ENCODE measurements at regions of chr17 and their contacts with region 1.

Region 1: GRCh38 chr17:29219378-29220047 is 27.1 kb upstream of the CRYBA1 start:
- DNase-seq: peak in 3 of 4 donors; percentile 70 to 91 (median 87)
- ATAC-seq: peak; percentile 94
- H3K4me3 ChIP-seq: no peak overlapping the region
- H3K27ac ChIP-seq: no peak overlapping the region
- H3K4me1 ChIP-seq: peaks cover 0 to 9% of the 10 kb centered on the region in 2 donors
- H3K27me3 ChIP-seq: no peaks in the 10 kb centered on the region
- CTCF ChIP-seq: peak; percentile 91 to 96

Region 2: GRCh38 chr17:29124117-29124924 is 95.2 kb before region 1 on chr17:
- intact Hi-C with region 1: loop called in 1 of 2 experiments (anchors 10 kb)
- DNase-seq: peak in 3 of 4 donors; percentile 44 to 74 (median 44)
- ATAC-seq: peak; percentile 87
- H3K4me3 ChIP-seq: no peak overlapping the region
- H3K27ac ChIP-seq: peak overlapping the region; percentile 30 to 71
- H3K4me1 ChIP-seq: peaks cover 0 to 39% of the 10 kb centered on the region in 2 donors
- H3K27me3 ChIP-seq: no peaks in the 10 kb centered on the region
- CTCF ChIP-seq: peak; percentile 48 to 55

Region 3: DNA sequence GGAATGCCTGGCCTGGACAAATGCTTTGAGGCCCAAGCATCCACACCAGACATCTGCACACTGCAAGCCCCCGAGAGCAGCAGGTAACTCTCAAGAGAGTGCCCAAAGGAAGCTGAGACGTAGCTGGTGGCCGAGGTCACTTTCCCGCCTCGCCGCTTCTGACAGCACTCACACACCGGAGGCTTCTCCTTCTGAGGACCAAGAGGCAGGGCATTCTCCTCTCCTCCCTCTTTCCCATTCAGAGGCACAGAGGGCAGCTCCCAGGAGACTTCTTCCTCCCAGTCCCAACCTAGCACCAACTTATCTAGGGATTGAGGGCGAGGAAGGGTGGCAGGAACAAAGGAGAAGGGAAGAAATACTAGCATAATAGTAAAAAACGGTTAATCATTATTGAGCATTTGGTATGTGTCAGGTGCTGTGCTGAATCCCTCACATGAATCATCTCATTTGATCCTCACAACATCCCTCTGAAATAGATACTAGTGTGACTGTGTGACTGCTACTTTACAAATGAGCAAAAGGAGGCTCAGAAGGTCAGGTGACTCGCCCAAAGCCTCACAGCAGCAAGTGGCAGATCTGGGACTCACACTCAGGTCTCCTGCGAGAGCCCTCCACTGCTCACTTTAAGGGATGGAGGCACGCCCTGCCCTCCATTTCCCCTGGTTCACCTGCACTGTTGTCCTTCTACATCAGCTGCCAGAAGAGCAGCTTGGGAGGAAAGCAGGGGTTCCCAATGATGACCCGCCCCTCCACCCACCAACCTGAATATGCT is 81.1 kb before region 1 on chr17:
- intact Hi-C with region 1: no loop called
- DNase-seq: peak in 1 of 4 donors; percentile 62
- ATAC-seq: no peak
- H3K4me3 ChIP-seq: peak overlapping the region in 1 of 2 donors; percentile 48
- H3K27ac ChIP-seq: peak overlapping the region in 1 of 2 donors; percentile 96
- H3K4me1 ChIP-seq: peaks cover 25 to 56% of the 10 kb centered on the region in 2 donors
- H3K27me3 ChIP-seq: no peaks in the 10 kb centered on the region
- CTCF ChIP-seq: no peak

Region 4: DNA sequence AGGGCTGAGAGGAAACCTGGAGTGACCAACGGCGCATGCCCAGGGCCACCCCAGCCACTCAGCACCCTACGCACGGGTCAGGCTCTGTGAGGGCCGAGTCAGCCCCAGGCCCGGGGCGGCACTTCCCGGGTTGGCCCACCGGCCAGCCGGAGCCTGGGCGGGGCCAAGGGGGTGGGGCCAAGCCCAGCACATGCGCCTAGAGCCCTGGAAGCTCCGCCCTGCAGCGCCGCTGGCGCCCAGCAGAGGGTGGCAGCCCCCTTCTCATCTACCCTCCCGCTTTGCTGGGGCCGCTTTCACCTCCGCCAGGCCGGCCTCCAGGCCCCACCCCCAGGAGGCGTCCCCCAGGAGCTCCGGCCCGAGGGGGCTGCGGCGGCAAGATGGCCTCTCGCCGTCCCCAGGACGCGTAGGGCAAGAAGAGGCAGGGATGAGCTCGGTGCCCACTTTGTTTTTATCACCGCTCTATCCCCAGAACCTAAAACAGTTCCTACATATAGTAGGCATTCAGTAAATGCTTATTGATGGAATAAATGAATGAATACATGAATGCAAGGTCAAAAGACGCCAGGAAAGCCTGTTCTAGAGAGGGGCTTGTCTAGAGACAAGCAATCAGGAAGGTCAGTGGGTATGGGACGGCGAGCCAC is 70.6 kb before region 1 on chr17:
- intact Hi-C with region 1: loop called in 1 of 2 experiments (anchors 2 kb)
- DNase-seq: peak; percentile 92 to 99 (median 96)
- ATAC-seq: peak; percentile 97
- H3K4me3 ChIP-seq: peak overlapping the region; percentile 35 to 37
- H3K27ac ChIP-seq: peak overlapping the region; percentile 81 to 87
- H3K4me1 ChIP-seq: peaks cover 11 to 57% of the 10 kb centered on the region in 2 donors
- H3K27me3 ChIP-seq: no peaks in the 10 kb centered on the region
- CTCF ChIP-seq: peak; percentile 95 to 100

Region 5: GRCh38 chr17:29273924-29274323 is 54.4 kb after region 1 on chr17:
- intact Hi-C with region 1: no loop called
- DNase-seq: no peak
- ATAC-seq: no peak
- H3K4me3 ChIP-seq: no peak overlapping the region
- H3K27ac ChIP-seq: no peak overlapping the region
- H3K4me1 ChIP-seq: peaks cover 4 to 49% of the 10 kb centered on the region in 2 donors
- H3K27me3 ChIP-seq: no peaks in the 10 kb centered on the region
- CTCF ChIP-seq: no peak

Region 6: DNA sequence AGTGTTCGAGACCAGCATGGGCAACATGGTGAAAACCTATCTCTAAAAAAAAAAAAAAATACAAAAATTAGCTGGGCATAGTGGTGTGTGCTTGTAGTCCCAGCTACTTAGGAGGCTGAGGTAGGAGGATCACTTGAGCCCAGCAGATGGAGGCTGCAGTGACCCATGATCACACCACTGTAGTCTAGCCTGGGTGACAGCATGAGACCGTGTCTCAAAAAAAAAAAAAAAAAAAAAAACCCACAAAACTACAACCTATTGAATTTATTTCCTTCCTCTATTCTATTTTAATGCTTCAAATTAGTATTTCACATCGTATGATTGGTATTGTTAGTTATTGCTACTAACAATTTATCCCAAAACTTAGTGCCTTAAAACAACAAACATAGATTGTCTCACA is 83.9 kb after region 1 on chr17:
- intact Hi-C with region 1: no loop called
- DNase-seq: no peak
- ATAC-seq: no peak
- H3K4me3 ChIP-seq: no peak overlapping the region
- H3K27ac ChIP-seq: no peak overlapping the region
- H3K4me1 ChIP-seq: no peaks in the 10 kb centered on the region
- H3K27me3 ChIP-seq: peaks cover 0 to 5% of the 10 kb centered on the region in 2 donors
- CTCF ChIP-seq: no peak